ENCODE measurements at regions of chr7 and their contacts with region 1.

Region 1: GRCh38 chr7:106659963-106660861 is 746 bp downstream of the CCDC71L start:
- DNase-seq: peak; percentile 97
- H3K4me3 ChIP-seq: peak overlapping the region; percentile 63 to 90 (median 74)
- H3K27ac ChIP-seq: peak overlapping the region; percentile 91 to 99 (median 98)
- H3K4me1 ChIP-seq: peaks cover 17 to 42% (median 35%) of the 10 kb centered on the region in 6 donors
- H3K27me3 ChIP-seq: no peaks in the 10 kb centered on the region
- CTCF ChIP-seq: peak; percentile 63 to 92 (median 82)
- POLR2A ChIP-seq: no peak

Region 2: DNA sequence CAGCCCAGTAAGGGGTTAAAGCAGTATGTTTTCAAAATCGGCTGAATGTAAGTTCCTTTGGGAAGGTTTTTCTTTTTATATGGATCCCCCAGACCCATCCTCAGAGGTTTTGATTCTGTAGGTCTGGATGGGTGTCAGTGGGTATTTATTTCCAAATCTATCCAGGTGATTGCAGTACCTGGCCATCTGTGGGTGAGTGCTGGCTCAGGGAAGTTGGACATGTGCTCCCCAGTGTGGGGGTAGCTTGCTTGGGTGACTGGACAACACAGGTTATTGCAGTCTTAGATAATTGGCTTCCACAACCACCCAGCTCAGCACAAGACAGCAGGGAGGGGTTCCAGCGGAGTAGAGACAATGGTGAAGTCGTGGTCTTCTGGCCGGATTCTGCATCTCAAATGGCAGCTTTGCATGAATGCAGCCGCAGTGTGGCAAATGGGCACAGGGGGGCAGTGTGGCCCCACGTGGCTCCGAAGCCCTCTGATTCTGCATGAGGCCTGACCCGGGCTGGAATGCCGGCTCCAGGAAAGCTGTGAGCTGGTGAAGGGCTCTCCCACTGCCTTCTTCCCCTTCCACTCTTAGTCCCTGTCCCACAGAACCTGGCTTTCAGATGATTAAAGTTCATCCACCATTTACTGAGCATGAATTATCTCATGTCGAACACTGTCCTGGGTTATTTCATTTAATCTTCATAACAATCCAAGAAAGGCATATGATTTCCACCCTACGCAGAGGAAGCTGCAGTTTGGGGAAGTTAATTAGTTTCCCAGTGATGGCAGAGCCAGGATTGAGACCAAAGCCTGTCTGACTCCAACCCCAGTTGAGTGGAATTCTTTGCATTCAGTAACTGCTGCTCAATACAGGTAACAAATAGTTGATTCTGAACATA is 483.6 kb before region 1 on chr7:
- intact Hi-C with region 1: loop called (anchors 5 kb)
- DNase-seq: peak; percentile 91
- H3K4me3 ChIP-seq: no peak overlapping the region
- H3K27ac ChIP-seq: peak overlapping the region in 1 of 8 donors; percentile 40
- H3K4me1 ChIP-seq: peaks cover 0 to 25% (median 11%) of the 10 kb centered on the region in 6 donors
- H3K27me3 ChIP-seq: peaks cover 0 to 12% (median 0%) of the 10 kb centered on the region in 7 donors
- CTCF ChIP-seq: peak; percentile 85 to 96 (median 93)
- POLR2A ChIP-seq: no peak

Region 3: DNA sequence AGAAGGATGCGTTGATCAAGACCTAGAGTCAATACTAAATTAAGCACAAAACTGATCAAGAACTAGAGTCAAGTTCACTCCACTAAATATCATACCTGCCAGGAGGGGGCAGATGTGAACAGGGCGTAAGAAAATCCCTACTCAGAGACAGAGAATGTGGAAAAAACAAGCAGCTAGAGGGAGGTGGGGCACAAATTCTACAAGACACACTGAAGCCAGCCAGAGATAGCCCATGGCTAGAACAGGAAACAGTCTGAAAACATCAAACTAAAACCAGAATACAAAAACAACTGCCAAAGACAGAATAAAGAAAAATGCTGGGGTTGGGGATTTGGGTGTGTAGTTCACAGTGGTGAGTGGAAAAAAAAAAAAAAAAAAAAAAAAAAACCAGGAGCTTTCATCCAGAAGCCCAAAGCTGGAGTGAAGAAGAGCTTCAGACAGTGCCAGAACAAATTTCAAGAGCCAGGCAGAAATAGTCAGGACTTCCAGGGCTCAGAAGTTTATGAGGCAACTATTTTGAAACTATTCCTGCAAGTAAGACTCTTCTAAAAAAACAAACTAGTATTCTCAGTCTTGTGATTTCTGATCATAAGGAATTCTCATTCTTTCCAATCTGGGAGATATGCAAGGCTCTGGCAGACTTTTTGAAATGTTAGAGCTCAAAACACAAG is 117.5 kb before region 1 on chr7:
- intact Hi-C with region 1: loop called (anchors 10 kb)
- DNase-seq: no peak
- H3K4me3 ChIP-seq: no peak overlapping the region
- H3K27ac ChIP-seq: peak overlapping the region in 6 of 8 donors; percentile 25 to 57 (median 47)
- H3K4me1 ChIP-seq: peaks cover 0 to 9% (median 3%) of the 10 kb centered on the region in 6 donors
- H3K27me3 ChIP-seq: no peaks in the 10 kb centered on the region
- CTCF ChIP-seq: peak in 9 of 11 experiments; percentile 37 to 78 (median 61)
- POLR2A ChIP-seq: no peak

Region 4: GRCh38 chr7:106731187-106731586 is 71.0 kb after region 1 on chr7:
- intact Hi-C with region 1: loop called (anchors 5 kb)
- DNase-seq: no peak
- H3K4me3 ChIP-seq: peak overlapping the region in 1 of 8 donors; percentile 11
- H3K27ac ChIP-seq: peak overlapping the region in 5 of 8 donors; percentile 5 to 46 (median 32)
- H3K4me1 ChIP-seq: peaks cover 15 to 32% (median 22%) of the 10 kb centered on the region in 6 donors
- H3K27me3 ChIP-seq: no peaks in the 10 kb centered on the region
- CTCF ChIP-seq: no peak
- POLR2A ChIP-seq: no peak